A673 (cell line): ENCODE measurements at regions of chr4 and their contacts with region 1.

Region 1: GRCh38 chr4:85747882-85748491 is 273.0 kb downstream of the ARHGAP24 start:
- DNase-seq: peak; percentile 70
- H3K4me3 ChIP-seq: no peak overlapping the region
- H3K27ac ChIP-seq: no peak overlapping the region
- H3K4me1 ChIP-seq: peaks cover 15% of the 10 kb centered on the region
- H3K27me3 ChIP-seq: no peaks in the 10 kb centered on the region
- CTCF ChIP-seq: peak; percentile 70

Region 2: DNA sequence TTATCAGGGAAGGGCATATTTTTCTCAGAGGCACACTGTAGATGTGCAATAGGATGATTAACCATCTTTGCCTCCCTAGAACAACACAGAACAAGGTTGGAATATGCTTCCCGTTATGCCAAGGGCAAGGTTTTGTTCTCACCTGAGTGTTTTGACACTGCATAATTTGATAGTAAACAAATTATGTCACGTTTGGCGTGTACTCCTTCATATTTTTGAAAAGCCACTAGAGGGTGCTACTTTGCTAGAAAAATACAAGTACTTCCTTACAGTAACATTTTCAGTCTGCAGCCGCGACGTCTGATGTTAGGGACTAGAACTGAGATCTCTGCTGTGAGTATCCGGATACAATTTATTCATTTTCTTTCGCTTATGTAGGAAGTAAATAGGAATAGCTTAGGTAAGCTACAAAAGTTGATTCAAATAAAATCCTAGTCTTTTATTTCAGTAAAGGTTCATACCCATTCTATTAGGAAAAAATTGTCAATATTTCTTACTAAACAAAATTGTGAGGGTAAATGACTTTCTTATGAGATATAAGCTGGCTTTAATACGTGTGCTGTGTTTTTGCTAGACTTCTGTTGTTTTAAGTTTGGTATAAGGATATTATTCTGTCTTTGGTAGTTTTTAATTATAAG is 600.4 kb before region 1 on chr4:
- CTCF ChIA-PET with region 1: no interaction called
- POLR2A ChIA-PET with region 1: no interaction called
- intact Hi-C with region 1: loop called (anchors 5 kb)
- DNase-seq: peak; percentile 62
- H3K4me3 ChIP-seq: no peak overlapping the region
- H3K27ac ChIP-seq: no peak overlapping the region
- H3K4me1 ChIP-seq: no peaks in the 10 kb centered on the region
- H3K27me3 ChIP-seq: no peaks in the 10 kb centered on the region
- CTCF ChIP-seq: peak; percentile 54

Region 3: GRCh38 chr4:85370430-85371032 is 377.5 kb before region 1 on chr4:
- CTCF ChIA-PET with region 1: interaction called, 9 read pairs
- POLR2A ChIA-PET with region 1: no interaction called
- intact Hi-C with region 1: loop called (anchors 10 kb)
- DNase-seq: peak; percentile 49
- H3K4me3 ChIP-seq: no peak overlapping the region
- H3K27ac ChIP-seq: no peak overlapping the region
- H3K4me1 ChIP-seq: no peaks in the 10 kb centered on the region
- H3K27me3 ChIP-seq: no peaks in the 10 kb centered on the region
- CTCF ChIP-seq: peak; percentile 67

Region 4: GRCh38 chr4:85419103-85419502 is 328.9 kb before region 1 on chr4:
- CTCF ChIA-PET with region 1: no interaction called
- POLR2A ChIA-PET with region 1: no interaction called
- intact Hi-C with region 1: loop called (anchors 5 kb)
- DNase-seq: no peak
- H3K4me3 ChIP-seq: no peak overlapping the region
- H3K27ac ChIP-seq: no peak overlapping the region
- H3K4me1 ChIP-seq: no peaks in the 10 kb centered on the region
- H3K27me3 ChIP-seq: no peaks in the 10 kb centered on the region
- CTCF ChIP-seq: no peak

Region 5: GRCh38 chr4:85498068-85498733 is 249.8 kb before region 1 on chr4:
- CTCF ChIA-PET with region 1: no interaction called
- POLR2A ChIA-PET with region 1: no interaction called
- intact Hi-C with region 1: loop called (anchors 10 kb)
- DNase-seq: no peak
- H3K4me3 ChIP-seq: no peak overlapping the region
- H3K27ac ChIP-seq: no peak overlapping the region
- H3K4me1 ChIP-seq: peaks cover 7% of the 10 kb centered on the region
- H3K27me3 ChIP-seq: no peaks in the 10 kb centered on the region
- CTCF ChIP-seq: no peak

Region 6: GRCh38 chr4:86155766-86156165 is 407.8 kb after region 1 on chr4:
- CTCF ChIA-PET with region 1: interaction called, 17 read pairs
- POLR2A ChIA-PET with region 1: no interaction called
- intact Hi-C with region 1: no loop called
- DNase-seq: no peak
- H3K4me3 ChIP-seq: no peak overlapping the region
- H3K27ac ChIP-seq: no peak overlapping the region
- H3K4me1 ChIP-seq: no peaks in the 10 kb centered on the region
- H3K27me3 ChIP-seq: no peaks in the 10 kb centered on the region
- CTCF ChIP-seq: no peak